Activated CD4-positive, alpha-beta T cell treated with anti-CD3 and anti-CD28 coated beads for 36 hours (primary cell): ENCODE measurements at regions of chr20 and their contacts with region 1.

Region 1: DNA sequence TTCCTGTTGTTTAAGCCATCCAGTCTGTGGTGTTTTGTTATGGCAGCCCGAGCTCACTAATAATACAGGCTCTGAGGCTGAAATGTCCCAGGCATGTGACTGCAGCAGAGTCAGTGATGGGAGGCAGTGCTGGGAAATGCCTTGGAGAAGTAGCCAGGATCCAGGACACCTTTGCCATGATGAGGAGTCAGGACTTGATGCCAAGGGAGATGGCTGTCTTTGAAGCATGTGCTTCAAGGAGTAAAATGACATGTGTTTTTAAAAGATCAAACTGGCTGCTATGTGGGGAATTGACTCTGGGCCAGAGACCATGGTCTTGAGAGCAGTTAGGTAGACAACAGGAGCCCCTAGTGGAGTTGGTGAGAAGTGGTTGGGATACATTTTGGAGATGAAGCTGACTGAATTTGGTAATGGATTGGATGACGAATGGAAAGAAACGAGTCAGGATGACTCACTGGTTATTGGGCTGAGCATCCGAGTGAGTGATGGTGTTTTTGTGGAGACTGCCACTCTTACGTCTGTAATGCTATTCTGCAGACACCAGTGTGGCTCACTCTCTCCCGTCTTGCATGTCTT is 322.2 kb downstream of the PLCB1 start:
- DNase-seq: peak; percentile 48
- ATAC-seq: peak; percentile 95
- H3K4me3 Mint-ChIP-seq: no peak overlapping the region
- H3K27ac Mint-ChIP-seq: no peak overlapping the region
- H3K4me1 Mint-ChIP-seq: peaks cover 6% of the 10 kb centered on the region
- H3K27me3 Mint-ChIP-seq: no peaks in the 10 kb centered on the region

Region 2: GRCh38 chr20:8305449-8305978 is 148.7 kb before region 1 on chr20:
- CTCF ChIA-PET with region 1: no interaction called
- POLR2A ChIA-PET with region 1: no interaction called
- intact Hi-C with region 1: loop called in 1 of 2 experiments (anchors 10 kb)
- DNase-seq: peak; percentile 85
- ATAC-seq: peak; percentile 88
- H3K4me3 Mint-ChIP-seq: no peak overlapping the region
- H3K27ac Mint-ChIP-seq: no peak overlapping the region
- H3K4me1 Mint-ChIP-seq: peaks cover 6% of the 10 kb centered on the region
- H3K27me3 Mint-ChIP-seq: peaks cover 2% of the 10 kb centered on the region

Region 3: GRCh38 chr20:8473459-8473858 is 19.2 kb after region 1 on chr20:
- CTCF ChIA-PET with region 1: no interaction called
- POLR2A ChIA-PET with region 1: no interaction called
- intact Hi-C with region 1: no loop called
- DNase-seq: no peak
- ATAC-seq: no peak
- H3K4me3 Mint-ChIP-seq: no peak overlapping the region
- H3K27ac Mint-ChIP-seq: no peak overlapping the region
- H3K4me1 Mint-ChIP-seq: no peaks in the 10 kb centered on the region
- H3K27me3 Mint-ChIP-seq: no peaks in the 10 kb centered on the region

Region 4: GRCh38 chr20:8589956-8590355 is 135.7 kb after region 1 on chr20:
- CTCF ChIA-PET with region 1: no interaction called
- POLR2A ChIA-PET with region 1: no interaction called
- intact Hi-C with region 1: no loop called
- DNase-seq: no peak
- ATAC-seq: no peak
- H3K4me3 Mint-ChIP-seq: no peak overlapping the region
- H3K27ac Mint-ChIP-seq: no peak overlapping the region
- H3K4me1 Mint-ChIP-seq: no peaks in the 10 kb centered on the region
- H3K27me3 Mint-ChIP-seq: no peaks in the 10 kb centered on the region